Mammary epithelial cell (primary cell): ENCODE measurements at regions of chr4 and their contacts with region 1.

Region 1: GRCh38 chr4:81197864-81198524 is 17.0 kb downstream of the PRKG2 start:
- DNase-seq: no peak
- H3K4me3 ChIP-seq: no peak overlapping the region
- H3K27ac ChIP-seq: no peak overlapping the region
- H3K4me1 ChIP-seq: no peaks in the 10 kb centered on the region
- H3K27me3 ChIP-seq: no peaks in the 10 kb centered on the region
- CTCF ChIP-seq: no peak

Region 2: GRCh38 chr4:81255524-81255923 is 57.5 kb after region 1 on chr4:
- CTCF ChIA-PET with region 1: no interaction called
- dilution Hi-C with region 1: no loop called
- in situ Hi-C with region 1: no loop called
- intact Hi-C with region 1: loop called (anchors 10 kb)
- DNase-seq: peak; percentile 51
- H3K4me3 ChIP-seq: no peak overlapping the region
- H3K27ac ChIP-seq: no peak overlapping the region
- H3K4me1 ChIP-seq: no peaks in the 10 kb centered on the region
- H3K27me3 ChIP-seq: no peaks in the 10 kb centered on the region
- CTCF ChIP-seq: no peak